Tibial artery (tissue), 4 donors: ENCODE measurements at regions of chr17 and their contacts with region 1.

Region 1: GRCh38 chr17:13874817-13875216 is 194.5 kb upstream of the COX10 start:
- DNase-seq: no peak
- H3K4me3 ChIP-seq: no peak overlapping the region
- H3K27ac ChIP-seq: no peak overlapping the region
- H3K4me1 ChIP-seq: no peaks in the 10 kb centered on the region
- H3K27me3 ChIP-seq: no peaks in the 10 kb centered on the region
- CTCF ChIP-seq: no peak

Region 2: DNA sequence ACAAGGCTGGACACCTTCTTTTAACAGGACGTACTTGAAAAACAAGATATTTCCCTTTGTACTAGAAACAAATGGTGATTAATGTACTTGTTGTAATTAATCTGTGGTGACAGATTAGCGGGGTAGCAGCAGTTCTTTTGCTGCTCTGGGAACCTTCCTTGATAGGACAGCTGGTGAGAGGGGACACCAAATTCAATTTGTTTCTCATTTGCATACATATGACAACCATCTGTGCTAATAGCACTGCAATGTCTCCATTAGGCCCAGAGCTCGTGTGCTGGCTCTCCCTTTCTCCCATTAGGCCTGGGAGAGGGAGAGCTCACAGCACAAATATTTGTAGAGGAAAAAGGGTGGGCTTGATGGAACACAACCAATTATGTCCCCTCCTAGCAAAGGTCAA is 52.1 kb before region 1 on chr17:
- intact Hi-C with region 1: loop called (anchors 10 kb)
- DNase-seq: no peak
- H3K4me3 ChIP-seq: no peak overlapping the region
- H3K27ac ChIP-seq: no peak overlapping the region
- H3K4me1 ChIP-seq: no peaks in the 10 kb centered on the region
- H3K27me3 ChIP-seq: no peaks in the 10 kb centered on the region
- CTCF ChIP-seq: no peak